OCI-LY7 (cell line): ENCODE measurements at regions of chr2 and their contacts with region 1.

Region 1: DNA sequence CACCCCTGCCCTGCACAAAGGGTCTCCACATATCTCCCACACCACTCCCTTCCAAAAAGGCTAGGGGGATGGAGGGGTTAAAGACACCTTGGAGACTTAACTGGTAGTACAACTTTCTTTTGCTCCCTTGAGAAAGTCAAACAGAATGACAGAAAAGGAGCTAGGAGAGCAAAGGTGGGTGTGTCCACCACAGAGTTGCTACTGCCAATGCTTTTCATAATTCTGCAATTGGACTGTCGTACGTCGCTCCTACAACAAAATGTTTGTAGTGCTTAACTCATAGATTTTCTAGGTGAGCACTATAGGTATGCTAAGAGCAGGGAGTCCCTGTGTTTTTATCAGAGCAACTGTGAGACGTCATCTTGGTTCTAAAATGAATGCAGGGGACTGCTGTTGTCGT is 27.0 kb downstream of the CEP68 start:
- DNase-seq: no peak
- H3K4me3 ChIP-seq: no peak overlapping the region
- H3K27ac ChIP-seq: no peak overlapping the region
- H3K4me1 ChIP-seq: peaks cover 41% of the 10 kb centered on the region
- CTCF ChIP-seq: no peak

Region 2: GRCh38 chr2:65070172-65070830 is 12.9 kb before region 1 on chr2:
- CTCF ChIA-PET with region 1: interaction called, 5 read pairs
- POLR2A ChIA-PET with region 1: interaction called, 12 read pairs
- intact Hi-C with region 1: no loop called
- DNase-seq: peak; percentile 76
- H3K4me3 ChIP-seq: peak overlapping the region; percentile 15
- H3K27ac ChIP-seq: peak overlapping the region; percentile 83
- H3K4me1 ChIP-seq: peaks cover 78% of the 10 kb centered on the region
- CTCF ChIP-seq: 0 out of 2 replicates have a peak, but pooled peaks have one; percentile 28

Region 3: GRCh38 chr2:65096948-65097347 is 13.8 kb after region 1 on chr2:
- CTCF ChIA-PET with region 1: no interaction called
- POLR2A ChIA-PET with region 1: interaction called, 11 read pairs
- intact Hi-C with region 1: no loop called
- DNase-seq: no peak
- H3K4me3 ChIP-seq: no peak overlapping the region
- H3K27ac ChIP-seq: no peak overlapping the region
- H3K4me1 ChIP-seq: peaks cover 4% of the 10 kb centered on the region
- CTCF ChIP-seq: no peak